ENCODE measurements at regions of chr7 and their contacts with region 1.

Region 1: DNA sequence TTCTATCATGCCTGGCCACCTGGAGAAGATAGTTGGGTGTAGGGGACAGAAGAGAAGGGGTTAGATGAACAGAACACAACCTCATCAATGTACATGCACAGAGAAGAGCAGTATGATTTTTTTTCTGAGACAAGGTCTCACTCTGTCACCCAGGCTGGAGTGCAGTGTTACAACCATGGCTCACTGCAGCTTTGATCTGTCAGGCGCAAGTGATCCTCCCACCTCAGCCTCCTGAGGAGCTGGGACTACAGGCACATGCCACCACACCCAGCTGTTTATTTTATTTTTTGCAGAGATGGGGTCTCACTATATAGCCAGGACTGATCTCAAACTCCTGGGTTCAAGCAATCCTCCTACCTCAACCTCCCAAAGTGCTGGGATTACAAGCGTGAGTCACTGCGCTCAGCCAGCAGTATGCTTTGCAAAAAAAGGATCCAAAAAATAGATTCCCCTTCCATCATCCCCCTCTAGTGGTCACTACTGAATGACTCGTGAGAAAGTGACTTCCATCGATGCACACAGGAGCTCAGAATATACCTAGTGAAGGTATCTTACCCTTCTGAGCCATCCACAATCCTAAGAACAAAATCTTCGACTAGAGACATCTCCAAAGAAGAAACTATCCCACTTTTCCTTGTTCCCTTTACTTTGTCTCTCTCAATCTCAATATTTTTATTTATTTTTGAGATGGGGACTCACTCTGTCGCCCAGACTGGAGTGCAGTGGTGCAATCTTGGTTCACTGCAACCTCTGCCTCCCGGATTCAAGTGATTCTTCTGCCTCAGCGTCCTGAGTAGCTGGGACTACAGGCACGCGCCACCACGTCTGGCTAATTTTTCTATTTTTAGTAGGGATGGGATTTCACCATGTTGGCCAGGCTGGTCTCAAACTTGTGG is 21.0 kb downstream of the ZCWPW1 start:
- DNase-seq: peak; percentile 55
- ATAC-seq: peak; percentile 94
- H3K4me3 Mint-ChIP-seq: no peak overlapping the region
- H3K27ac Mint-ChIP-seq: no peak overlapping the region
- H3K4me1 Mint-ChIP-seq: peaks cover 2% of the 10 kb centered on the region
- H3K27me3 Mint-ChIP-seq: no peaks in the 10 kb centered on the region

Region 2: DNA sequence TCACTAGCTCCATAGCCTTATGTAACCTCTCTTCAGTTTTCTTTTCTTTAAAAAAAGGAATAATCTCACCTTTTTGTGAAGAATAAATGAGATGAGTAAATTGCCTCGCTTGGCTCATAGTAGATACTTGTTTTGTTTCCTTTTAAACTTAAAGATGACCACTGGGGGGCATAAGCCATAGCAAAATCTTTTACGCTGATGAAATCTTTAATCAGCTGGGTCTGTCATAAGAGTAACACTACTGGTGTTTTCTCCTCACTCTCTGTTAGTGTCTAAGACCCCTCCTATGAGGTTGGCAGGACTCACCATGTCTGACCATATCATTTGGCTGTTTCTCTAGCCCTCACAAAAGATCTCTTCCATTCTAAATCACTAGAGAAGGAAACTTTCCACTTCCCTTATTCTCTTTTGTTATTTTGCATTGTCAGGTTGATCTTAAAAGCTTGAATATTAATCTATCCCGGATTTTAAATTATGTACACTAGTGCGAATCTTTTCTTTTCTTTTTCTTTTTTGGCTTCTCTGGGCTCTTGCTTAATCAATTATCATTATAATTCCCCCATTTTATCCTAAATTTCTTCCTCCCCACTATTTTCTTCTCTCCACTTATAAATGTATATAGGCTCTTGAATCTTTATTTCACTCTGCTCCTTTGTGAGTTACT is 217.4 kb before region 1 on chr7:
- CTCF ChIA-PET with region 1: interaction called, 5 read pairs
- POLR2A ChIA-PET with region 1: no interaction called
- intact Hi-C with region 1: loop called in 1 of 2 experiments (anchors 1 kb)
- DNase-seq: no peak
- ATAC-seq: peak; percentile 91
- H3K4me3 Mint-ChIP-seq: no peak overlapping the region
- H3K27ac Mint-ChIP-seq: peak overlapping the region; percentile 81
- H3K4me1 Mint-ChIP-seq: peaks cover 38% of the 10 kb centered on the region
- H3K27me3 Mint-ChIP-seq: no peaks in the 10 kb centered on the region

Region 3: DNA sequence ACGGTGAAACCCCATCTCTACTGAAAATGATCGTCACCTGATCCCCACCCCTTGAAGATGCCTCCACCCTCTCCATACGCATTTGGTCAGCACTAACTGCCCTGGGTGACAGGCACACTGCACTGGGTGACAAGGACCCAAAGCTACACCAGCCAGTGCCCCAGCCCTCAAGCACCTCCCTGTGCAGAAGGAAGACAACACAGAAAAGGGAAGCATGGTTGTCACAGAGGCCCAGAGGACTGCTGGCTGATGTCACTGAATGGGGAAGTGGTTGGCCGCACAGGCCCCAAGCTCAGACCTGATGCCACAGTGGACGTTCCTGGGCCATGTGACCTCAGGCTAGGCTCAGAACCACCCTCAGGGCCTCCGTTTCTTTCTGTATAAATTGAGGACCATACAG is 38.4 kb before region 1 on chr7:
- CTCF ChIA-PET with region 1: interaction called, 7 read pairs
- POLR2A ChIA-PET with region 1: no interaction called
- intact Hi-C with region 1: loop called (anchors 1 to 2 kb)
- DNase-seq: no peak
- ATAC-seq: no peak
- H3K4me3 Mint-ChIP-seq: no peak overlapping the region
- H3K27ac Mint-ChIP-seq: no peak overlapping the region
- H3K4me1 Mint-ChIP-seq: peaks cover 40% of the 10 kb centered on the region
- H3K27me3 Mint-ChIP-seq: no peaks in the 10 kb centered on the region

Region 4: GRCh38 chr7:100396421-100396982 is 11.0 kb before region 1 on chr7:
- CTCF ChIA-PET with region 1: interaction called, 19 read pairs
- POLR2A ChIA-PET with region 1: no interaction called
- intact Hi-C with region 1: no loop called
- DNase-seq: peak; percentile 82
- ATAC-seq: peak; percentile 92
- H3K4me3 Mint-ChIP-seq: peak overlapping the region; percentile 1
- H3K27ac Mint-ChIP-seq: peak overlapping the region; percentile 40
- H3K4me1 Mint-ChIP-seq: peaks cover 26% of the 10 kb centered on the region
- H3K27me3 Mint-ChIP-seq: peaks cover 20% of the 10 kb centered on the region

Region 5: GRCh38 chr7:100423315-100423714 is 15.8 kb after region 1 on chr7:
- CTCF ChIA-PET with region 1: interaction called, 10 read pairs
- POLR2A ChIA-PET with region 1: no interaction called
- intact Hi-C with region 1: no loop called
- DNase-seq: no peak
- ATAC-seq: no peak
- H3K4me3 Mint-ChIP-seq: no peak overlapping the region
- H3K27ac Mint-ChIP-seq: no peak overlapping the region
- H3K4me1 Mint-ChIP-seq: peaks cover 5% of the 10 kb centered on the region
- H3K27me3 Mint-ChIP-seq: no peaks in the 10 kb centered on the region

Measured in activated CD4-positive, alpha-beta T cell treated with anti-CD3 and anti-CD28 coated beads for 36 hours (primary cell).